ENCODE measurements at regions of chr12 and their contacts with region 1.

Region 1: DNA sequence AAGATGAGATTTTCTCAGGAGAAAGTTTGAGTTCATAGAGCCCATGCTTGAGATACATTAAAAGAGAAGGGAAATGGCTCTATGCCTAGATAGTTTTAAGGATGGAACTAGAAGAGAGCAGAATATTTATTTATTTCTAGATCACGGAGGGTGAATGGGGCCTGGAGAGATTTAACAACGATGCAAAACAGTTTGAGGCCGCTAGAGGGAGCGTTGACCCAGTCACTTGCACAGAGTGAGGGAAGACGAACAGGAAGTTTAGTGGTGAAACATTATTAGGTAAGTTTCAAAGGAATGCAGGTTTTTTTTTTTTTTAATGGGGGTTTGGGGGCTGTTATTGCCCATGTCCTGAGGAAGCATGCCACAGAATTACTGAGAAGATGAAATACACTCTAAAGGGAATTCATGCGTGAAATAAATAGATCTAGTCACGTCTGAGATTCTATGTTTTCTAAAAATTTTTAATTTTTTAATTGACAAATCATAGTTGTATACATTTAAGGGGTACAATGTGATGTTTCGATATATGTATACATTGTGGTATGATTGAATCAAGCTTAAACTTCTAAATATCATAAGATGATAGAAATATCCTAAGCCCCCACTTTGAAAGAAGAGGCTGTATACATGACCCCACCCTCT is 14.8 kb upstream of the PPP1R1A start:
- DNase-seq: peak; percentile 71
- ATAC-seq: peak; percentile 96
- H3K4me3 ChIP-seq: no peak overlapping the region
- H3K27ac ChIP-seq: no peak overlapping the region
- H3K4me1 ChIP-seq: peaks cover 0 to 11% of the 10 kb centered on the region in 2 experiments; a peak in 3 of 4 replicates
- H3K27me3 ChIP-seq: peaks cover 4% of the 10 kb centered on the region; the same call in 1 of the 2 replicates
- CTCF ChIP-seq: peak; percentile 74 to 85 (median 84)
- POLR2A ChIP-seq: no peak
- RAD21 ChIP-seq: peak; percentile 65

Region 2: GRCh38 chr12:54147186-54147585 is 456.1 kb before region 1 on chr12:
- CTCF ChIA-PET with region 1: no interaction called
- POLR2A ChIA-PET with region 1: no interaction called
- RAD21 ChIA-PET with region 1: no interaction called
- intact Hi-C with region 1: no loop called
- DNase-seq: no peak
- ATAC-seq: no peak
- H3K4me3 ChIP-seq: no peak overlapping the region
- H3K27ac ChIP-seq: no peak overlapping the region
- H3K4me1 ChIP-seq: no peaks in the 10 kb centered on the region
- H3K27me3 ChIP-seq: no peaks in the 10 kb centered on the region
- CTCF ChIP-seq: no peak
- POLR2A ChIP-seq: no peak
- RAD21 ChIP-seq: no peak

Region 3: DNA sequence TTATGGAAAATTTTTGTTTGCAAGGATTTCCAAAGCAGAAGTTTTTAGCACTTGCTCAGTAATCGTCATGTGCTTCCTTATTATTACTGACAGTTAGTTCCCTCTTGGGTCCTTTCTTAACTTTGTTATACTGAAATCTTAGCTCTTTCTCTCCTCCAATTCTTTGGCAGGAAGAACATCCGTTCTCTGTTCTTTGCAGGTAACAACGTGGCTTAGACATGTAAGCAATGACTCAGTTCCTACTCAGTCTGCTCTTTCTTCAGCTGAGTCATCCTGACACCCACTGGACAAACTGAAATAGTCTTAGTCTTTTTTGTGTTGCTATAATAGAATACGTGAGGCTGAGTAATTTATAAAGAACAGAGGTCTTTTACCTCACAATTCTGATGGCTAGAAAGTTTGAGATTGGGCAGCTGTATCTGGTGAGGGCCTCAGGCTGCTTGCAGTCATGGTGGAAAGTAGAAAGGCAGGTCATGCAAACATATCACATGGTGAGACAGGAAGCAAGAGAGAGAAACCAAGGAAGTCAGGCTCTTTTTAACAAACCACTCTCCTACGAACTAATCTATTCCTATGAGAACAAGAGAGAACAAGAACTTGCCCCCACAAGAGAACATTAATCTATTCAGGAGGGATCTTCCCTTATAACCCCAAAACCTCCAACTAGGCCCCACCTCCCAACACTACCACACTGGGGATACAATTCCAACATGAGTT is 332.1 kb after region 1 on chr12:
- CTCF ChIA-PET with region 1: no interaction called
- POLR2A ChIA-PET with region 1: no interaction called
- RAD21 ChIA-PET with region 1: no interaction called
- intact Hi-C with region 1: loop called (anchors 5 kb)
- DNase-seq: peak; percentile 77
- ATAC-seq: peak; percentile 89
- H3K4me3 ChIP-seq: peak overlapping the region in 1 of 2 experiments; percentile 39; a peak in 2 of 4 replicates
- H3K27ac ChIP-seq: peak overlapping the region; percentile 55; the same call in 1 of the 2 replicates
- H3K4me1 ChIP-seq: peaks cover 5 to 43% of the 10 kb centered on the region in 2 experiments; a peak in 3 of 4 replicates
- H3K27me3 ChIP-seq: no peaks in the 10 kb centered on the region
- CTCF ChIP-seq: peak in 2 of 3 experiments; percentile 13 to 31; a peak in 1 of 6 replicates
- POLR2A ChIP-seq: no peak
- RAD21 ChIP-seq: peak; percentile 68

Measured in HCT116 (cell line).